ENCODE measurements at regions of chr19 and their contacts with region 1.

Region 1: GRCh38 chr19:39474139-39474622 is 6.5 kb upstream of the TIMM50 start:
- DNase-seq: peak; percentile 52 to 80
- H3K4me3 ChIP-seq: no peak overlapping the region
- H3K27ac ChIP-seq: peak overlapping the region in 1 of 5 donors; percentile 13
- H3K4me1 ChIP-seq: peaks cover 0 to 5% (median 0%) of the 10 kb centered on the region in 4 donors
- H3K27me3 ChIP-seq: no peaks in the 10 kb centered on the region
- CTCF ChIP-seq: peak in 5 of 7 experiments; percentile 52 to 79 (median 76)
- EP300 ChIP-seq: no peak
- POLR2A ChIP-seq: no peak

Region 2: GRCh38 chr19:39532233-39533002 is 58.2 kb after region 1 on chr19 and contains the start of gene EID2B:
- intact Hi-C with region 1: loop called (anchors 10 kb)
- DNase-seq: peak; percentile 97 to 99
- H3K4me3 ChIP-seq: peak within 1 kb of the TSS; percentile 70 to 97 (median 80)
- H3K27ac ChIP-seq: peak within 1 kb of the TSS; percentile 76 to 92 (median 83)
- H3K4me1 ChIP-seq: peaks cover 0 to 36% (median 19%) of the 10 kb centered on the region in 4 donors
- H3K27me3 ChIP-seq: no peaks in the 10 kb centered on the region
- CTCF ChIP-seq: peak in 5 of 7 experiments; percentile 89 to 100 (median 98)
- EP300 ChIP-seq: no peak
- POLR2A ChIP-seq: peak in 1 of 4 donors; percentile 18
- total RNA-seq, gene EID2B: 0.58 to 5.7 (median 1.9) TPM in 4 of 5 donors, not detected in the other

Region 3: DNA sequence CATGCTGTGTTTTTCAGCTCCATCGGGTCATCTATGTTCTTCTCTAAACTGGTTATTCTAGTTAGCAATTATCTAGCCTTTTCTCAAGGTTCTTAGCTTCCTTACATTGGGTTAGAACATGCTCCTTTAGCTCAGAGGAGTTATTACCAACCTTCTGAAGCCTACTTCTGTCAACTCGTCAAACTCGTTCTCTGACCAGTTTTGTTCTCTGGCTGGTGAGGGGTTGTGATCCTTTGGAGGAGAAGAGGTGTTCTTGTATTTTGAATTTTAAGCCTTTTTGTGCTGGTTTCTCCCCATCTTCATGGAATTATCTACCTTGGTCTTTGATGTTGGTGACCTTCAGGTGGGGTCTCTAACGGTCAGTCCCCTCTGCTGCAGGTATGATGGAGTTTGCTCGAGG is 149.0 kb after region 1 on chr19:
- intact Hi-C with region 1: no loop called
- DNase-seq: no peak
- H3K4me3 ChIP-seq: no peak overlapping the region
- H3K27ac ChIP-seq: no peak overlapping the region
- H3K4me1 ChIP-seq: no peaks in the 10 kb centered on the region
- H3K27me3 ChIP-seq: peaks cover 0 to 24% (median 10%) of the 10 kb centered on the region in 3 donors
- CTCF ChIP-seq: no peak
- EP300 ChIP-seq: no peak
- POLR2A ChIP-seq: no peak